ENCODE measurements at regions of chr1 and their contacts with region 1.

Region 1: GRCh38 chr1:24688621-24689195 is 45.6 kb downstream of the SRRM1 start:
- DNase-seq: no peak
- H3K4me3 ChIP-seq: no peak overlapping the region
- CTCF ChIP-seq: peak; percentile 89

Region 2: GRCh38 chr1:24575915-24576587 is 112.7 kb before region 1 on chr1:
- CTCF ChIA-PET with region 1: no interaction called
- POLR2A ChIA-PET with region 1: no interaction called
- DNase-seq: no peak
- H3K4me3 ChIP-seq: no peak overlapping the region
- CTCF ChIP-seq: no peak

Region 3: DNA sequence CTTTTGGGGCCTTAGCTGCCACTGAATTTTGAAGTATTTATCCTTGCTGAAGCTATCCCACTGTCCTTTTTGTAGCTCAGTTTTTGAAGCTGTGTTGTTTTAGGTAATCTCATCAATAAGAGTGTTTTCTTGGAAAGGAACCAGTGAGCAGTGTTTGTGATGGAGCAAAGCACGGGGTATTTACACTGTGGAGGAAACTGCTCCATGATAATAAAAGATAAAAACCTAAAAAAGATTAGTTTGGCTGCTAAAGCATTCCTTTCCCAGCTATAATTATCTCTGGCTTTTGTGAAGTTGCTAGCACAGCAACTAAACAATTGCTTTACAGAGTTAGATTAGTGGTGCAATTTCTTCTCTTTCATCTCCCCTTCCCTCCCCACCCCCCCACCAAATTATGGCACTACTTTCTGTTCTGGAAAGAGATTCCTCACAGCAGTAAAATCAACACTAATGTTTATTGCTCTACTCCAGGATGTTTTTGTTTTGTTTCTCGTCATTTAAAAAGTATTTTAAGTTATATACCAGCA is 24.1 kb before region 1 on chr1:
- CTCF ChIA-PET with region 1: interaction called, 13 read pairs
- POLR2A ChIA-PET with region 1: no interaction called
- DNase-seq: no peak
- H3K4me3 ChIP-seq: no peak overlapping the region
- CTCF ChIP-seq: no peak

Region 4: GRCh38 chr1:24744911-24745710 is 56.4 kb after region 1 on chr1 and contains the start of gene CLIC4:
- CTCF ChIA-PET with region 1: interaction called, 30 read pairs
- POLR2A ChIA-PET with region 1: interaction called, 21 read pairs
- DNase-seq: peak; percentile 95
- H3K4me3 ChIP-seq: peak within 1 kb of the TSS; percentile 94
- CTCF ChIP-seq: peak; percentile 44

Region 5: DNA sequence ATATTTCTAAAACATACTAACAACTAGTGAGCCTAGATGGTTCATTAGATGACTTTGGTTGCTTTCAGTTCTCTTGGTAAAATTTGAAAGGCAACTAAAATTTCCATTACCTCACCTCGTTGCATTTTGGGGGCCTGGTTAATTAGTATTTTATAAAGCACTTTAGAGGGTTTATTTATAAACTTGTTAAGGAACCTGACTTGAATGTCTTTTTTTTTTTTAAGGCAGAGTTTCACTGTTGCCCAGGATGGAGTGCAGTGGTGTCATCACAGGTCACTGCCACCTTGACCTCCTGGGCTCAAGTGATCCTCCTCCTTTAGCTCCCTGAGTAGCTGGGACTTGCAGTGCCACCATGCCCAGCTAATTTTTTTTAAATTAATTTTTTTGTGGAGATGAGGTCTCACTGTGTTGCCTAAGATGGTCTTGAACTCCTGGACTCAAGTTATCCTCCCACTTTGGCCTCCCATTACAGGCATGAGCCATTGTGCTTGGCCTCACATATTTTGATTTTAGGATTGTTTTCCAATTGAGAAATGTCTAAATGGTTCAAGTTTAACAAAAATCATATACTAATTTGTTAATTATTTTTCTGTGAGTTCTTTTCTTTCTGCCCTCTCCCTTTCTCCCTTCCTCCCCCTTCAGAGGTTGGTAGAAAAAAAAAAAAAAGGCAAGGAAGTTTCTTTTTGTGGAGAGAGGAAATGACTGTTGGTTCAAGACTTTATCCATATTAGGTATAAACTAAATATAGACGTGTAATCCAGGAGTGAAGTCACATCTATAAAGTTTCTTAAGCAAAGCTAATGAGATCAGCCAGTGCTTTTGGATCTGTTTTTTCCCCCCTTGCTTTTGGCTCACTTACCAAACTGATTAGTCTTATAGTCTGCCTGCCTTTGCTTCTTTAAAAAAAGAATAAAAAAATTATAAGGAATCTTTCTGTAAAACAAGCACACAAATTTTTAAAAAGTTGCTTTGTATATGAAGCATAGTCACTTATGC is 81.2 kb after region 1 on chr1:
- CTCF ChIA-PET with region 1: interaction called, 15 read pairs
- POLR2A ChIA-PET with region 1: interaction called, 6 read pairs
- DNase-seq: peak; percentile 94
- H3K4me3 ChIP-seq: no peak overlapping the region
- CTCF ChIP-seq: no peak

Region 6: GRCh38 chr1:24830680-24831272 is 142.1 kb after region 1 on chr1:
- CTCF ChIA-PET with region 1: interaction called, 307 read pairs
- POLR2A ChIA-PET with region 1: no interaction called
- DNase-seq: no peak
- H3K4me3 ChIP-seq: no peak overlapping the region
- CTCF ChIP-seq: peak; percentile 53

Region 7: GRCh38 chr1:24861821-24862727 is 173.4 kb after region 1 on chr1:
- CTCF ChIA-PET with region 1: interaction called, 13 read pairs
- POLR2A ChIA-PET with region 1: no interaction called
- DNase-seq: no peak
- H3K4me3 ChIP-seq: no peak overlapping the region
- CTCF ChIP-seq: peak; percentile 5